H1 (cell line): ENCODE measurements at regions of chr20 and their contacts with region 1.

Region 1: DNA sequence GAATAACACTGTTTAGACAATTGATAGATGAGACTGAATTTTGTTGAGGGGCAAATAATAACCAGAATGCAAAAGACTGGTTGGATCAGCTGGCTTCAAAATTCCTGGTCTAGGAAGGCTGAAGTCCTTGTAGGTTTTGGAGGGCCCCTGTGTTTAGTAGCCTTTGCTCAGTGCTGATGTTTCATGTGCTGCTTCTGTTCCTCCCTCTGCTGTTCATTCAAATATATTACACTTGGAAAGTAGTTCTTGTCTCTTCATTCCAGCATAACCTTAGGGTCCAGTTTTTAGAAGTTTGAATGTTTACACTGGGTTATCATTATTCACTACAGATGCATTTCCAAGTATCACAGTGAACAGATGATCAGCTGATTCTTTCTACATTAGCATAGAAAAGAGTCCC is 72.5 kb downstream of the FLRT3 start:
- DNase-seq: no peak
- H3K4me3 ChIP-seq: no peak overlapping the region
- H3K27ac ChIP-seq: no peak overlapping the region
- H3K4me1 ChIP-seq: no peaks in the 10 kb centered on the region
- H3K27me3 ChIP-seq: no peaks in the 10 kb centered on the region
- CTCF ChIP-seq: peak in 2 of 3 experiments; percentile 19 to 32; a peak in 2 of 4 replicates
- EP300 ChIP-seq: no peak
- POLR2A ChIP-seq: no peak
- RAD21 ChIP-seq: peak; percentile 43 to 49

Region 2: DNA sequence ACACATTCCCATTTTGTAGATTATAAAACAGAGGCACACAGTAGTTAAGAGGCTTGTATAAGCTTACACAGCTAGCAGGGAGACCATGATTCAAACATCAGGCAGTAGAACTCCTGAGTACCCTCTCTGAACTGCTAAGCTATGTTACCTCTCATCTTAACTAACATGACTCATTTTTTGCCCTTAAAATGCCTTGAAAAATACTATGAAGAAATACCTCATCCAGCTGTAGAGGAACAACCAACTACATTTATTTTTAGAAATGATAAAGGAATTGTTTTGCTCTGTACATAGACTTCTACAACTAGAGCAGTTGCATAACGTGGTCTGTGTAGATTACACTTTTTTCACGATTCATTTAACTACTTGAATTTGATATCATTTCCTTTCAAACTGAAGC is 29.5 kb before region 1 on chr20:
- CTCF ChIA-PET with region 1: no interaction called
- POLR2A ChIA-PET with region 1: no interaction called
- DNase-seq: no peak
- H3K4me3 ChIP-seq: no peak overlapping the region
- H3K27ac ChIP-seq: no peak overlapping the region
- H3K4me1 ChIP-seq: no peaks in the 10 kb centered on the region
- H3K27me3 ChIP-seq: no peaks in the 10 kb centered on the region
- CTCF ChIP-seq: no peak
- EP300 ChIP-seq: no peak
- POLR2A ChIP-seq: no peak
- RAD21 ChIP-seq: no peak

Region 3: DNA sequence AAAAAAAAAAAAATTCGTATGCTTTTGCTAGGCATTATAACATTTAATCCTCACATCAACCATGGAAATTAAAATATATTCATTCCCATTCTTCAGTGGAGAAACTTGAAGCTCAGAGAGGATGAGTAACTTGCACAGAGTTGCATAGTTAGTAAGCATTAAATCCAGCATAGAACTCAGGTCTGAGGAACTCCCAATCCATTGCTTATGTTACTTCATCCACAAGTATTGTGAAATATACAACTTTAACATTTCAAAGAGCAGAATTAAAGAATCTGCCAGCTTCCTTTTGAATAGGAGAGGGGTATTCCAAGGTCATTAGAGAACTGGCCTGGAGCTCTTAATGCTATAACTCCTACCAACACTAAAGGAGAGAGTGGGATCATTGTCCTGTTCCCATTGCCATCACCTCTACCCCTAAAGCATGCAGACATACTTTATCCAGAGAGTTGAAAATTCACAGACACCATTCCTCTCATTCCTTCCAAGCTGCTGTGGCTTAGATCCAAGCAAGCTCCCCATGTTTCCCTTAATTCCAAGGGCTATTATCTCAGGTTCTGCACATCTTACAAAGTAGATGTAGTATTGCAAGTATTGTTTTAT is 19.4 kb before region 1 on chr20:
- CTCF ChIA-PET with region 1: interaction called, 13 read pairs
- POLR2A ChIA-PET with region 1: no interaction called
- DNase-seq: no peak
- H3K4me3 ChIP-seq: no peak overlapping the region
- H3K27ac ChIP-seq: no peak overlapping the region
- H3K4me1 ChIP-seq: no peaks in the 10 kb centered on the region
- H3K27me3 ChIP-seq: no peaks in the 10 kb centered on the region
- CTCF ChIP-seq: no peak
- EP300 ChIP-seq: no peak
- POLR2A ChIP-seq: no peak
- RAD21 ChIP-seq: no peak

Region 4: GRCh38 chr20:14282140-14282539 is 17.3 kb after region 1 on chr20:
- CTCF ChIA-PET with region 1: no interaction called
- POLR2A ChIA-PET with region 1: no interaction called
- DNase-seq: no peak
- H3K4me3 ChIP-seq: no peak overlapping the region
- H3K27ac ChIP-seq: no peak overlapping the region
- H3K4me1 ChIP-seq: no peaks in the 10 kb centered on the region
- H3K27me3 ChIP-seq: no peaks in the 10 kb centered on the region
- CTCF ChIP-seq: no peak
- EP300 ChIP-seq: no peak
- POLR2A ChIP-seq: no peak
- RAD21 ChIP-seq: no peak